Colonic mucosa (tissue), 4 donors: ENCODE measurements at regions of chr11 and their contacts with region 1.

Region 1: DNA sequence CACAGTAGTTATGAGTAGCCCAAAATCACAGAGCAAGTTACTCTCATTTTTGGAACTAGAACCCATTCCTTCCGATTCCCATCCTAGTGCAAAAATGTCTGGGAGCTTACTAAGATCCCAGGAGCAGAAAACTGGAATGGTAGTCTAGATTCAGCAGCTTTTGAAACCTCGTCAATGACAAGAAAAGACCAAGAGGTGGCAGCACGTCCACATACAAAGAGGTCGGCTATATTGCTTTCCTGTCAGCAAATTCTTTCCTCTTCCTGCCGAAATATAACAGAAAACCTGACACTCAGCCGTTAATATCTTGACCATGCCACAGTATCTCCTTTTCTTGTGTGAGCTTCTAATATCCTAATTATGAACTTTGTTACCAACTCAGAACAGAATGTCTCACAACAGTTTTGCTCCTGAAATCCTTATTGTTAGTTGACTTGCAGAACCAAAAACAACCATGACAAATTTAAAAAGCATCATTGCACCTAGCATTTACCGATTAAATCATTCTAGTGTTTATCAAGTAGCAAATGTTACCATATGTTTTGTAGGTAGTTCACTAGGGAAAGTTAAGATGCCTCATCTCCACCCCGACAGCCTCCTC is 92.8 kb upstream of the OR9G4 start:
- DNase-seq: peak; percentile 69
- H3K4me3 ChIP-seq: no peak overlapping the region
- H3K27ac ChIP-seq: no peak overlapping the region
- H3K4me1 ChIP-seq: no peaks in the 10 kb centered on the region
- H3K27me3 ChIP-seq: no peaks in the 10 kb centered on the region
- CTCF ChIP-seq: peak; percentile 60

Region 2: GRCh38 chr11:57116654-57117053 is 275.3 kb after region 1 on chr11:
- intact Hi-C with region 1: loop called (anchors 5 kb)
- DNase-seq: peak; percentile 41
- H3K4me3 ChIP-seq: no peak overlapping the region
- H3K27ac ChIP-seq: no peak overlapping the region
- H3K4me1 ChIP-seq: no peaks in the 10 kb centered on the region
- H3K27me3 ChIP-seq: no peaks in the 10 kb centered on the region
- CTCF ChIP-seq: peak; percentile 38

Region 3: DNA sequence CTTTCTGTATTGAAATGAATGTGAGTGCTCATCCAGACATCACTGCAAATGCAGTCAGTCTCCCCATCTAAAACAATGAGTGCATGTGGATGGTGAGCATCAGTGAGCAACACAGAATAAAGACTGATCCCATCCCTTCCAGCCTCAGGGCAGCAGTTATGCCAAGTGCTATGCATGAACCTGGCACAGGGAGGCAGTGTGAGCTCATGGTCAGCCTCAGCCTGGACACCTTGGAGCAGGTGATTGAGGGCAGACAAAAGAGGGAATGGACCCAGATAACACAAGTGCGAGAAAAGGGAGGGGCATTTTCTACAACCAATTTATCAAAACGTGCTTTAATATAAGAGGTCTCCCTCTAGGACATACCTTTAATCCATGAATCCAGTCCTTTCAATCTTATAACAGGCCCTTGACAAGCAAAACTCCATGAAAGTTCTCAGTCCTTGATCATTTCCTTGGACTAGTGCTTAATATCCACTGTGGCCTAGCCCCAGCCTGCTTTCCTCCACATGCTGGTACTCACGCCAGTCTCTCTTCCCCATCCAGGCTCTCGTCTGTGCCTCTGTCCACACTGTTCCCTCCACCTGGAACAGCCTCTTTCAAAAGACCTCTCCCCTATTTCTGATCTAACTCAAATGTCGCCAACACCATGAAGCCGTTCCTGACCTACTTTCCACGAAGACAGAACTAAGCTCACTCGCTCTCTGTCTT is 289.9 kb after region 1 on chr11:
- intact Hi-C with region 1: loop called (anchors 5 kb)
- DNase-seq: peak; percentile 32
- H3K4me3 ChIP-seq: no peak overlapping the region
- H3K27ac ChIP-seq: no peak overlapping the region
- H3K4me1 ChIP-seq: no peaks in the 10 kb centered on the region
- H3K27me3 ChIP-seq: no peaks in the 10 kb centered on the region
- CTCF ChIP-seq: peak; percentile 42

Region 4: DNA sequence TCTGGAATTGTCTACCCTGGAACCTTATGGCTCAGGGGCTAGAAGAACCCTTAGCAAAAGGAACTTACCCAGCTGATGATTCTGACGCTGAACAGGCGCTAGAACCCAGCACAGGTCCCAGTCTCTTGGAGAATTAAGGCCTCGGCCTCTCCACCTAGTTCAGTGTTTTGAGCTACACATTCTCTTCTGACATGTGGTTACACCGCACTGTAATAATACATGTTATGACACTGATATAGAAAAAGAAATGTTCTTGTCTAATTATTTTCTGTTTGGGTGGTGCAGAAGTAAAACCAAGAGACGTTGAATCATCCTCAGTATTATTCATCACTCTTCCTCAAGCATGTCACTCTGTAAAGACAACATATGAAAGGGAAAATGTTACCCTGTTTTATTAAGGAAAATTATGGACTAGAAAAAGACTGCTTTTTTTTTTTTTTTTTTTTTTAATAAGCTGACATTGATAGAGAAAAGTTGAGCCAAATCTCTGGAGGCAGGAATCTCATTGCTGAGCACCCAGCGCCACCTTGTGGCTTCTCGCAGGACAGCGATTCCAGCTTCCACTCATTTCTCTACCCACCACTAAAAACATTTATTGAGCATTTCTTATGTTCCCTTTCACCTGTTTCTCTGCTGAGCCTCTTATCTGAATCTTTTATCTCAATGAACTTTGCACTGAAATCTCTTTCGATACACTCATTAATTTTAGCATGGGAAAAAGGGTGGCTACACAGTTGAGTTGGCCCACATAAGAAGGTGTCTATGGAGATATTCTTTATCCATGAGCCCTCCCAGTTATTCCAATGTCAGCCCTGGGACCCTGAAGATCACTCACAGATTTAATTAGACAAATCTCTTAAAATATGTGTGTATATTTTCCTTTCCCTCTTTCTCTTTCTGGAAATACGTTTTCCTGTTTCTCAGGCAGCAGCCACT is 408.3 kb after region 1 on chr11:
- intact Hi-C with region 1: loop called (anchors 2 kb)
- DNase-seq: peak; percentile 78
- H3K4me3 ChIP-seq: no peak overlapping the region
- H3K27ac ChIP-seq: no peak overlapping the region
- H3K4me1 ChIP-seq: peaks cover 4% of the 10 kb centered on the region
- H3K27me3 ChIP-seq: no peaks in the 10 kb centered on the region
- CTCF ChIP-seq: peak; percentile 86